ENCODE measurements at regions of chr15 and their contacts with region 1.

Region 1: GRCh38 chr15:48975472-48976419 is 12.0 kb upstream of the SHC4 start:
- DNase-seq: peak; percentile 60 to 74 (median 69)
- H3K4me3 ChIP-seq: peak overlapping the region in 1 of 2 donors; percentile 28
- H3K4me3 Mint-ChIP-seq: peak overlapping the region; percentile 40 to 76 (median 68)
- H3K27ac ChIP-seq: no peak overlapping the region
- H3K27ac Mint-ChIP-seq: no peak overlapping the region
- H3K4me1 ChIP-seq: peaks cover 9% of the 10 kb centered on the region
- H3K4me1 Mint-ChIP-seq: peaks cover 0 to 9% (median 3%) of the 10 kb centered on the region in 4 donors
- H3K27me3 ChIP-seq: no peaks in the 10 kb centered on the region
- H3K27me3 Mint-ChIP-seq: peaks cover 9 to 26% of the 10 kb centered on the region in 2 donors

Region 2: GRCh38 chr15:48842501-48842900 is 133.2 kb before region 1 on chr15:
- CTCF ChIA-PET with region 1: no interaction called
- POLR2A ChIA-PET with region 1: no interaction called
- intact Hi-C with region 1: no loop called
- DNase-seq: no peak
- H3K4me3 ChIP-seq: no peak overlapping the region
- H3K4me3 Mint-ChIP-seq: no peak overlapping the region
- H3K27ac ChIP-seq: no peak overlapping the region
- H3K27ac Mint-ChIP-seq: no peak overlapping the region
- H3K4me1 ChIP-seq: no peaks in the 10 kb centered on the region
- H3K4me1 Mint-ChIP-seq: no peaks in the 10 kb centered on the region
- H3K27me3 ChIP-seq: no peaks in the 10 kb centered on the region
- H3K27me3 Mint-ChIP-seq: peaks cover 1 to 6% of the 10 kb centered on the region in 2 donors

Region 3: GRCh38 chr15:48877630-48878595 is 97.8 kb before region 1 on chr15 and contains the start of gene EID1:
- CTCF ChIA-PET with region 1: interaction called, 10 read pairs
- POLR2A ChIA-PET with region 1: interaction called, 7 read pairs
- intact Hi-C with region 1: no loop called
- DNase-seq: peak; percentile 93 to 95 (median 94)
- H3K4me3 ChIP-seq: peak within 1 kb of the TSS; percentile 74 to 96
- H3K4me3 Mint-ChIP-seq: peak within 1 kb of the TSS; percentile 96 to 100 (median 98)
- H3K27ac ChIP-seq: peak within 1 kb of the TSS; percentile 71
- H3K27ac Mint-ChIP-seq: peak within 1 kb of the TSS; percentile 97 to 100 (median 99)
- H3K4me1 ChIP-seq: peaks cover 26% of the 10 kb centered on the region
- H3K4me1 Mint-ChIP-seq: peaks cover 18 to 31% (median 24%) of the 10 kb centered on the region in 4 donors
- H3K27me3 ChIP-seq: no peaks in the 10 kb centered on the region
- H3K27me3 Mint-ChIP-seq: peaks cover 3 to 4% of the 10 kb centered on the region in 2 donors
- total RNA-seq, gene EID1: 76.0 to 91.2 TPM

Region 4: DNA sequence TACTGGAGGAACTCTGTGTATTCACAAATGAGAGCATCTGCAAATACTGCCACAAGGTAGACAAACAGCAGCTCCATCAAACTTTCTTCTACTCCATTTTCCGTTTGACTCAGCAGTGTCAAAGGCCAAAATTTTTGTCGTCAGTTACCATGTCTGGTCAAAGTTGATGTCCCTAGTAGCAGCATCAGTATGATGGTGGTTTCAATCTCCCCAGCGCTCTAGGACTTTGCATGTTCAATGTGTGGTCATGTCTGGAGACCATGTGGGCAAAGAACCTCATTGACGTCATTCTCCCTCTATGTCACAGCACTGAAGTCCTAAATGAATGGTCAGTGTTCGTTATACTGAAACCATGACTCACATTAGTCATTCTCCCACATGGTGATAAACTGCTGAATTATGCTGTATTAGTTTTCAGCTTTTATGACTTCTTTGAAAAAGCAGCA is 35.3 kb before region 1 on chr15:
- CTCF ChIA-PET with region 1: interaction called, 13 read pairs
- POLR2A ChIA-PET with region 1: no interaction called
- intact Hi-C with region 1: no loop called
- DNase-seq: no peak
- H3K4me3 ChIP-seq: no peak overlapping the region
- H3K4me3 Mint-ChIP-seq: no peak overlapping the region
- H3K27ac ChIP-seq: no peak overlapping the region
- H3K27ac Mint-ChIP-seq: no peak overlapping the region
- H3K4me1 ChIP-seq: no peaks in the 10 kb centered on the region
- H3K4me1 Mint-ChIP-seq: no peaks in the 10 kb centered on the region
- H3K27me3 ChIP-seq: no peaks in the 10 kb centered on the region
- H3K27me3 Mint-ChIP-seq: peaks cover 20 to 27% of the 10 kb centered on the region in 2 donors

Region 5: DNA sequence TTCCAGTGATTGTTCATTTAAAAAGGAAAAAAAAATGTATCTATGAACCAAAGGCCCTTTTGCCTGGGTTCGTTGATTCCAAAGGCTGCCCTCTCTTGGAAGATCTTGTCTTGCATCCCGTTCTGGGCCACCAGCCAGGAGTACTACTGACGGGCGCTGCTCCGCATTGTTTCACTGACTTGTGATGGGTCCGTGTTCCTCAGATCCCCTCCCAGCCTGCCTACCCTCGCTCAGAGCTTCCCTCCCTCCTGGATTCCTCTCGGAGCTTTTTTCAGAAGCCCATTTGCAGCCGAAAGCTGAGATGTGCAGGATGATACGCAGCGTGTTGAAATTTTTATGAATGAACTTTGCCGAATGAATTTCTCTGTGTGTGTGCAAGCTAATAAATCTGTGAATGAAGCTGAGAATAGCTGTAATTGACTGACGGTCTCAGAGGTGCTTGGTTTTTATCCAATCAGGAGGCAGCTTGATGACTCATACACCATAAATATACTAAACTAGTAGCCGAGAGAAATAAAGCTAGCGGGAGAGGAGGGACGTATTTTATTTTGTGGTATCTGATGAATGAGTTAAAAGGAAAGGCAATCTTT is 12.1 kb before region 1 on chr15 and contains the start of gene SHC4:
- CTCF ChIA-PET with region 1: interaction called, 68 read pairs
- POLR2A ChIA-PET with region 1: interaction called, 5 read pairs
- intact Hi-C with region 1: no loop called
- DNase-seq: peak; percentile 21 to 42 (median 29)
- H3K4me3 ChIP-seq: peak within 1 kb of the TSS; percentile 32 to 52
- H3K4me3 Mint-ChIP-seq: peak within 1 kb of the TSS; percentile 78 to 89 (median 82)
- H3K27ac ChIP-seq: no peak within 1 kb of the TSS
- H3K27ac Mint-ChIP-seq: peak within 1 kb of the TSS in 1 of 7 donors; percentile 19
- H3K4me1 ChIP-seq: peaks cover 24% of the 10 kb centered on the region
- H3K4me1 Mint-ChIP-seq: peaks cover 17 to 26% (median 22%) of the 10 kb centered on the region in 4 donors
- H3K27me3 ChIP-seq: peaks cover 12% of the 10 kb centered on the region
- H3K27me3 Mint-ChIP-seq: peaks cover 22 to 30% of the 10 kb centered on the region in 2 donors
- total RNA-seq, gene SHC4: 0.28 to 0.29 TPM

Region 6: DNA sequence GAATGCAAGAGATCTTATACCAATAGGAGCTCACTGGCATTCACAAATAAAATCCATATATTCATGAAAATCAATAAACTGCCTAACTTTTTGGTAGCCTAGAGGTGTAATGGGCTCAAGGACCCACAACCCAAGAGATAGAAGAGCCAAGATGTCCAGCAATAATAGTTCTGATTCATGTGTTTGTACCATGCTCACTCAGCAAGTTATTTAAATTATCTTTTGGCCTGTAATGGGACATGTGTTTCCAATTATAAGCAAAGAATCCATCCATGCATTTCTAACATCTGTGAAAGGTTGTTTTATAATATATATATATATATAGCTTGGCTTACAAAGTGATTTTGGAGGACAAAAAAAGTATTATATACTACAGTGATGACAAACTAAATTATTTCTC is 17.6 kb after region 1 on chr15:
- CTCF ChIA-PET with region 1: interaction called, 23 read pairs
- POLR2A ChIA-PET with region 1: no interaction called
- intact Hi-C with region 1: no loop called
- DNase-seq: no peak
- H3K4me3 ChIP-seq: no peak overlapping the region
- H3K4me3 Mint-ChIP-seq: no peak overlapping the region
- H3K27ac ChIP-seq: no peak overlapping the region
- H3K27ac Mint-ChIP-seq: no peak overlapping the region
- H3K4me1 ChIP-seq: no peaks in the 10 kb centered on the region
- H3K4me1 Mint-ChIP-seq: peaks cover 0 to 1% (median 0%) of the 10 kb centered on the region in 4 donors
- H3K27me3 ChIP-seq: no peaks in the 10 kb centered on the region
- H3K27me3 Mint-ChIP-seq: no peaks in the 10 kb centered on the region

Region 7: GRCh38 chr15:49023354-49023753 is 47.6 kb after region 1 on chr15:
- CTCF ChIA-PET with region 1: interaction called, 12 read pairs
- POLR2A ChIA-PET with region 1: no interaction called
- intact Hi-C with region 1: no loop called
- DNase-seq: no peak
- H3K4me3 ChIP-seq: no peak overlapping the region
- H3K4me3 Mint-ChIP-seq: no peak overlapping the region
- H3K27ac ChIP-seq: no peak overlapping the region
- H3K27ac Mint-ChIP-seq: no peak overlapping the region
- H3K4me1 ChIP-seq: no peaks in the 10 kb centered on the region
- H3K4me1 Mint-ChIP-seq: peaks cover 0 to 9% (median 7%) of the 10 kb centered on the region in 4 donors
- H3K27me3 ChIP-seq: no peaks in the 10 kb centered on the region
- H3K27me3 Mint-ChIP-seq: no peaks in the 10 kb centered on the region

Region 8: GRCh38 chr15:49036650-49037545 is 61.2 kb after region 1 on chr15:
- CTCF ChIA-PET with region 1: no interaction called
- POLR2A ChIA-PET with region 1: no interaction called
- intact Hi-C with region 1: no loop called
- DNase-seq: peak in 1 of 5 donors; percentile 4
- H3K4me3 ChIP-seq: no peak overlapping the region
- H3K4me3 Mint-ChIP-seq: peak overlapping the region in 1 of 8 donors; percentile 21
- H3K27ac ChIP-seq: no peak overlapping the region
- H3K27ac Mint-ChIP-seq: no peak overlapping the region
- H3K4me1 ChIP-seq: peaks cover 14% of the 10 kb centered on the region
- H3K4me1 Mint-ChIP-seq: peaks cover 21 to 46% (median 30%) of the 10 kb centered on the region in 4 donors
- H3K27me3 ChIP-seq: no peaks in the 10 kb centered on the region
- H3K27me3 Mint-ChIP-seq: no peaks in the 10 kb centered on the region

Region 9: DNA sequence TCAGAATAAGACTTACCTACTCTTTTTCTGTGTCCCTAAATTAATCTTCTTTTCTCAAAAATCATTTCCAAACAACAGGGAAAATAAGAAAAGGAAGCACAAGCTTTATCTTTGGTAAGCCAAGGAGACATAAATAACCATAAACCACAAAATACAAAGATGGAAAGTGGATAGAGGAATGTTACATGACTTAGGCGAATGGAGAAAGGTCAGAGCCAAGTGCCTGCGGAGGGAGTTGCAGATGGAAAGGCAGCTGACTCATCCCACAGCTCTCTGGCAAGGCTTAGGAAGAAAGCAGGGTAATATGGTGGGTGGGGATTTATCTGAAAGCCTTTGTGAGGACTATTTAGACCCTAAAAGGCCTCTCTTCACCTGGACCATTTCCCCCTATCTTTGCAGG is 267.1 kb after region 1 on chr15:
- CTCF ChIA-PET with region 1: no interaction called
- POLR2A ChIA-PET with region 1: no interaction called
- intact Hi-C with region 1: no loop called
- DNase-seq: no peak
- H3K4me3 ChIP-seq: no peak overlapping the region
- H3K4me3 Mint-ChIP-seq: no peak overlapping the region
- H3K27ac ChIP-seq: no peak overlapping the region
- H3K27ac Mint-ChIP-seq: no peak overlapping the region
- H3K4me1 ChIP-seq: no peaks in the 10 kb centered on the region
- H3K4me1 Mint-ChIP-seq: peaks cover 0 to 4% (median 2%) of the 10 kb centered on the region in 4 donors
- H3K27me3 ChIP-seq: no peaks in the 10 kb centered on the region
- H3K27me3 Mint-ChIP-seq: no peaks in the 10 kb centered on the region